Natural killer cell (primary cell): ENCODE measurements at regions of chr11 and their contacts with region 1.

Region 1: GRCh38 chr11:105109855-105110687 is 29.5 kb downstream of the CARD18 start:
- DNase-seq: no peak
- ATAC-seq: no peak
- H3K4me3 ChIP-seq: no peak overlapping the region
- H3K4me3 Mint-ChIP-seq: no peak overlapping the region
- H3K27ac ChIP-seq: no peak overlapping the region
- H3K27ac Mint-ChIP-seq: no peak overlapping the region
- H3K4me1 ChIP-seq: no peaks in the 10 kb centered on the region
- H3K4me1 Mint-ChIP-seq: peaks cover 6 to 7% of the 10 kb centered on the region in 2 donors
- H3K27me3 ChIP-seq: no peaks in the 10 kb centered on the region
- H3K27me3 Mint-ChIP-seq: peaks cover 0 to 23% of the 10 kb centered on the region in 2 donors
- CTCF ChIP-seq: no peak

Region 2: GRCh38 chr11:104623518-104623917 is 486.6 kb before region 1 on chr11:
- intact Hi-C with region 1: no loop called
- DNase-seq: no peak
- ATAC-seq: no peak
- H3K4me3 ChIP-seq: no peak overlapping the region
- H3K4me3 Mint-ChIP-seq: no peak overlapping the region
- H3K27ac ChIP-seq: no peak overlapping the region
- H3K27ac Mint-ChIP-seq: no peak overlapping the region
- H3K4me1 ChIP-seq: no peaks in the 10 kb centered on the region
- H3K4me1 Mint-ChIP-seq: no peaks in the 10 kb centered on the region
- H3K27me3 ChIP-seq: no peaks in the 10 kb centered on the region
- H3K27me3 Mint-ChIP-seq: no peaks in the 10 kb centered on the region
- CTCF ChIP-seq: no peak

Region 3: GRCh38 chr11:104836691-104837090 is 273.4 kb before region 1 on chr11:
- intact Hi-C with region 1: no loop called
- DNase-seq: no peak
- ATAC-seq: no peak
- H3K4me3 ChIP-seq: no peak overlapping the region
- H3K4me3 Mint-ChIP-seq: no peak overlapping the region
- H3K27ac ChIP-seq: no peak overlapping the region
- H3K27ac Mint-ChIP-seq: no peak overlapping the region
- H3K4me1 ChIP-seq: no peaks in the 10 kb centered on the region
- H3K4me1 Mint-ChIP-seq: no peaks in the 10 kb centered on the region
- H3K27me3 ChIP-seq: no peaks in the 10 kb centered on the region
- H3K27me3 Mint-ChIP-seq: no peaks in the 10 kb centered on the region
- CTCF ChIP-seq: no peak

Region 4: DNA sequence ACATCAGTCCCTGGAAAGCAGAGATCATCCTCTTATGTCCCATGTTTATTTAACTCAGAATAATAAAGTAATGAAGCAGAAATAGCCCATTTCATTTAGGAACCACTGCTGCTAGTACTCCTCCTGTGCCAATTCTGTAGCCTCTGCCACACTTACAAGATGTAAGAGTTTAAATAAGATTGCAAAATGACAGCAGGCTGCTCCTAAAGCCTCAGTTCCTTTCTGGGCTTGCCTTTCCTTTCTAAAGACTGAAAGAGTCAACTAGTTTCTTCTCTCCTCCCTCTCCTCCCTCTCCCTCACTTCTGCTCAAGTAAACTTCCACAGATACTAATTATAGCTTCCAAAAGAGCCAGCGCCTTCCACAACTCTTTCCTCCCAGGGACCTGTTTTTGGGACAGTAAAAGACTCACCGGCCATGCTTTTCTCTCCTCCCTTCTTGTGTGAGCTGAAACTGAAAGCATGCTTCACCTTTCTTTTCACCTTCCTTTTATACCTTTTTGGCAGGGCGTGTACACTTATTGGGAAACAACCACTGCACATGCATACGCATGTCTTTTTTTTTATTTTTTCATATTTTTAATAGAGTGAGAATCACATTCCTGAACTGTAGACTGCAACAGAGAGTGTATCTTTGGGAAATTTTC is 38.9 kb before region 1 on chr11:
- intact Hi-C with region 1: loop called (anchors 2 kb)
- DNase-seq: peak in 1 of 2 donors; percentile 51
- ATAC-seq: no peak
- H3K4me3 ChIP-seq: no peak overlapping the region
- H3K4me3 Mint-ChIP-seq: peak overlapping the region; percentile 10
- H3K27ac ChIP-seq: no peak overlapping the region
- H3K27ac Mint-ChIP-seq: no peak overlapping the region
- H3K4me1 ChIP-seq: no peaks in the 10 kb centered on the region
- H3K4me1 Mint-ChIP-seq: peaks cover 6% of the 10 kb centered on the region in 2 donors
- H3K27me3 ChIP-seq: no peaks in the 10 kb centered on the region
- H3K27me3 Mint-ChIP-seq: peaks cover 0 to 9% of the 10 kb centered on the region in 2 donors
- CTCF ChIP-seq: no peak